Breast epithelium (tissue), 4 donors: ENCODE measurements at regions of chr3 and their contacts with region 1.

Region 1: DNA sequence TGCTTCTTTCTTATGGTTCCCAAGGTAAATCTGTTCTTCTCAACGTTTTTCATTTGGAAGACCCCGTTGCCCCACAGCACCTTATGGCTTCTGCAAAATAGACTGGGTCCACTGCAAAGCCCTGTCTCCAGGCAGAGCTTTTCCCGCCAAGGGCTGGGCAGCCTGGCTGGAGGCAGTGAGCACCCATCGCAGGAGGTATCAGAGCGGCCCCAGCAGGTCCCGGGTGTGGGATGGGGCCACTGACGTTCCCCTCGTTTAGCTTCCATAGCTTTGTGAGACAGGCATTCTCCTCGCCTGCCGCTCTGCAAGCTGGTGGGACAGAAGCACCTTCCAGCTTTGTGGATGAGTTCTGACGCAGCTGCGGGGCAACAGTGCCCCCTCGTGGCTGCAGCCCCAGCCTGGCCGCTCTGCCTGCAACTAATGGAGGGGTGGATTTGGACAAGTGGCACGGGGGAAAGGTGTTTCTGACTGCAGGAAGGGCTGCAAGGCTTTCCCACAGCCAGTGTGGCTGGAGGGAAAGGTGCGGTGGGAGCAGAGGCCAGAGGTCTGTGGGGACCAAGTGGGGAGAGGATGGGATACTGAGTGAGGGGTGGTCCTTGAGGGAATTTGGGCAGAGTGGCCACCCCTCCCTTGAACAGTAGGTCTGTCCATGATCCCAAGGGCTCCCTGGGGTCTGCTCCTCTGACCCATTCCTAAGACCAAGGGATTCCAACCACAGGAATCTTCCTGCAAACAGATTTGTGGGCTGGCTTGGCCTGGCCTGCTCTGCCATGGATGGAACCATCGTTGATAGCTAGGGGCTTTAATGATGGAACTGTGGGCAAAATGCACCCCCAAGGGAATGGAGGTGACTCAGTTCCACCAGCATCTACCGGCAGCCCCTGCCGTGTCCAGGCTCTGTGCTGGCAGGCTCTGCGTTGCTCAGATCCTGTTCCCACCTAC is 99.4 kb downstream of the FBLN2 start:
- DNase-seq: peak; percentile 77 to 84
- H3K4me3 ChIP-seq: peak overlapping the region in 1 of 3 donors; percentile 35
- H3K27ac ChIP-seq: no peak overlapping the region
- H3K4me1 ChIP-seq: peaks cover 4 to 6% of the 10 kb centered on the region in 2 donors
- H3K27me3 ChIP-seq: peaks cover 0 to 4% of the 10 kb centered on the region in 2 donors
- CTCF ChIP-seq: peak; percentile 88 to 97 (median 94)
- POLR2A ChIP-seq: no peak

Region 2: DNA sequence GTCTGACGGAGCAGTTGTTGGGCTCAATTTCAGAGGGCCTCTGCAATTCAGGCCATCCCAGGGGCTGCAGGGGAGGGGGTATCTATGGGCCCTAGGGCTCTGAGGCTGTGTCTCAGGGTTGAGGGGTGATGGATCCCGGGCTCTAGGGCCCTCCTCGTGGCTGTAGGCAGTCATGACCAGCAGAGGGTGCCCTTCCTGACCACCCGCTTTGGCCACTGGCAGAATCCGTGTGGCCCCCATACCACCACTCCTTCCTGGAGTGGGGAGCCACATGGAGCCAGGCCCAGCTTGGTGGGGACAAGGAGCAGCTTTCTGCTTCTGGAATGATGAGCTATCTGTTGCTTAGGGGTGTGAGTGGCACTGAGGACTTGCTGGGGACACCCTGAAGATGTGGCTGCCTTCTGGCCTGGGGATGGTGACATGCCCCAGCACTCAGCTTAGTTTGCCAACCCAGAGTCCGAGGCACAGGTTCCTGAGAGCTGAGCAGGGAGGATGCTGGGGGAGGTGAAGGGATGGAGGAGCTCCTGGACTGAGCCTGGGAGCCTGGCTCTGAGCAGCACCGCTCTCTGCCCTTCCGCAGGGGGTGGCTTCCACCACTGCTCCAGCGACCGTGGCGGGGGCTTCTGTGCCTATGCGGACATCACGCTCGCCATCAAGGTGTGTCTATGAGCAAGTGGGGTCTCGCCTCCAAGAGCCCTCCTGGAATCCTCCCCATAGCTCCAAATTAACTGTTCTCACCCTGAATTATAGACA is 148.0 kb before region 1 on chr3:
- intact Hi-C with region 1: loop called (anchors 5 kb)
- DNase-seq: no peak
- H3K4me3 ChIP-seq: no peak overlapping the region
- H3K27ac ChIP-seq: no peak overlapping the region
- H3K4me1 ChIP-seq: peaks cover 0 to 6% of the 10 kb centered on the region in 2 donors
- H3K27me3 ChIP-seq: no peaks in the 10 kb centered on the region
- CTCF ChIP-seq: no peak
- POLR2A ChIP-seq: no peak

Region 3: GRCh38 chr3:13565581-13566452 is 82.5 kb before region 1 on chr3:
- intact Hi-C with region 1: loop called (anchors 2 kb)
- DNase-seq: no peak
- H3K4me3 ChIP-seq: no peak overlapping the region
- H3K27ac ChIP-seq: no peak overlapping the region
- H3K4me1 ChIP-seq: no peaks in the 10 kb centered on the region
- H3K27me3 ChIP-seq: no peaks in the 10 kb centered on the region
- CTCF ChIP-seq: no peak
- POLR2A ChIP-seq: no peak